Heart left ventricle (tissue), 16 donors: ENCODE measurements at regions of chr7 and their contacts with region 1.

Region 1: DNA sequence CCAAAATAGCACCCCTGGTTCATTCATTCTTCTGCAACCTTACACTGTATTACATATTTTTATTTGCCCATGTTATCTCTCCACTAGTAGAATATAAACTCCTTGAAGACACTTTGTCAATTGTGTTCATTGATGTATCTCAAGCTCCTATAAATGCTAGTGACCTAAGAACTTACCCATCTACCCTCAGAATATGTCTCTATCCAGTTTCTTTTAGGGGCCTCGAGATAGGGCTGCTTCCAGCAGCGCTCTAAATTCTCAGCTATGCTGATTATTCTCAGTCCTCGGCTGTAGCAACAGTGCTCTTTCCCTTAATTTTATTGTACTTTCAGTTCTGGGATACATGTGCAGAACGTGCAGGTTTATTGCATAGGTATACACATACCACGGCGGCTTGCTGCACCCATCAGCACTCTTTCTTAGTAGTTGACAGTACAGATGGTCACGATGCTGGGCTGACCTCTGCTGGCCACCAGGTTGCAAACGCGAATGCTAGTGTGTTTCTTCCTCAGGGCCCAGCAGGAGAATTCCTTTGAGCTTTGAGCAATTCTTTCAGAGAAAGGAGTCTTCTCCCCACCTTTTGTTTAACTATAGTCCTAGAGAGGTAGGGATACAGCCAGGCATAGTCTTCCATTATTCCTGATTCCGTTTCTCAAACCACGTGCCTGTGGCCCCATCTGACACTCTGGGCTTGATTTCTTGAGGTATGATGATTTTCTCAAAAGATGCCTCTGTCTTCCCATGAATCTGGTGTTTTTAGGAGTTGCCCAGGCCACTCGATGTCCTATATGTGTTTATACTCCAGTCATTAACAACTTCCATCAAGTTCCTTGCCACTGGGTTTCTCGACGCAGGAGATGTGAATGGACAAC is 49.1 kb upstream of the CDC14C start:
- DNase-seq: peak; percentile 8 to 55 (median 47)
- ATAC-seq: peak; percentile 75 to 87 (median 79)
- H3K4me3 ChIP-seq: no peak overlapping the region
- H3K27ac ChIP-seq: no peak overlapping the region
- H3K4me1 ChIP-seq: no peaks in the 10 kb centered on the region
- H3K27me3 ChIP-seq: peaks cover 0 to 2% (median 0%) of the 10 kb centered on the region in 9 donors
- CTCF ChIP-seq: peak; percentile 30 to 62 (median 50)
- POLR2A ChIP-seq: no peak

Region 2: GRCh38 chr7:48299580-48300169 is 575.6 kb before region 1 on chr7:
- intact Hi-C with region 1: loop called in 7 of 10 experiments (anchors 2 to 5 kb)
- DNase-seq: peak in 2 of 5 donors; percentile 30 to 45
- ATAC-seq: peak; percentile 55 to 75 (median 70)
- H3K4me3 ChIP-seq: no peak overlapping the region
- H3K27ac ChIP-seq: no peak overlapping the region
- H3K4me1 ChIP-seq: no peaks in the 10 kb centered on the region
- H3K27me3 ChIP-seq: no peaks in the 10 kb centered on the region
- CTCF ChIP-seq: peak; percentile 51 to 71 (median 62)
- POLR2A ChIP-seq: no peak

Region 3: DNA sequence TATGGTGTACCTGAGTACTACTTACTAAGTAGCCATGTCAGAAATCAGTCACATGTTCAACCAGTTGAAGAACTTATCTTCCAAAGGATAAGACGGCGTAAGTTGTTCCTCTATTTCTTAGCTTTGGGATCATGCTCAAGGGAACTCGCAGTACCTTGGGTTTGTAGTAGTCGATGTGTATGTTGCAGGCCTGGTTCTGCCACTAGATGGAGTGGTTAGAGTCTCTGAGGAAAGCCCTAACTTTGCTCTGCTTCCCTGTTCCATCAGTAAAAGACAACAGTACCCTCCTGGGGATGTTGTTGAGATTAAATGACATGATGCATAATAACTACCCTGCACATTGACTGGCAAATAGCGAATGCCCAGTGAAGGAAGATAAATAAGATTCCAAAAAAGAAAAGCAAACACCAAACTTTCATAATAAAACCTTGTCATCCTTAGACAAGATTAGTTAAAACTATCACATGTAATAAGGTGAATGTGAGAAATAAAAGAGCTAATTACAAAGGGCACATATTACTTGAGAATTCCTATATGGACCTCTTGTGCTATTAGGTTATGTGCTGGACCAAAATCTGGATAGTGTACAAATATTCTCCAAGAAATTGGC is 538.2 kb before region 1 on chr7:
- intact Hi-C with region 1: loop called in 1 of 10 experiments (anchors 2 kb)
- DNase-seq: no peak
- ATAC-seq: no peak
- H3K4me3 ChIP-seq: no peak overlapping the region
- H3K27ac ChIP-seq: no peak overlapping the region
- H3K4me1 ChIP-seq: no peaks in the 10 kb centered on the region
- H3K27me3 ChIP-seq: no peaks in the 10 kb centered on the region
- CTCF ChIP-seq: peak in 9 of 12 donors; percentile 17 to 49 (median 34)
- POLR2A ChIP-seq: no peak

Region 4: DNA sequence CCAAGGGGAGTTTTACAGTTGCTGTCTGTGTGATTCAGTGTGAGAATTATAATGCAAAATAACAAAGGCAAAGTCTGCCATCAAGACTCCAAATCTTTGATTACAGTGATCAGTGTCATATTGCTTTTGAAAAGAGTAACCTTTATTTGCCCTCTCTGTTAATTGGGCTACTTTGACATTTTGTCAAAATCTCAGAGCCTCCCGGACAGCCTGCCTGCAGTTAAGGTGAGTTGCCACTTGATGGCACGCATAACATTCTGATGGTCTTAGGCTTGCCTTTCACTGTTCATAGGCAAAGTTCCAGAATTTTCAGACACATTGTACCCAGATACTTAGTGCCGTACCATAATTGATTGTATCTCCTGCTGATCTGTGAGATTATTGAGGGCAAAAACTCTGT is 450.6 kb before region 1 on chr7:
- intact Hi-C with region 1: loop called in 9 of 10 experiments (anchors 2 to 10 kb)
- DNase-seq: no peak
- ATAC-seq: no peak
- H3K4me3 ChIP-seq: no peak overlapping the region
- H3K27ac ChIP-seq: no peak overlapping the region
- H3K4me1 ChIP-seq: no peaks in the 10 kb centered on the region
- H3K27me3 ChIP-seq: no peaks in the 10 kb centered on the region
- CTCF ChIP-seq: peak in 11 of 12 donors; percentile 11 to 51 (median 40)
- POLR2A ChIP-seq: no peak

Region 5: DNA sequence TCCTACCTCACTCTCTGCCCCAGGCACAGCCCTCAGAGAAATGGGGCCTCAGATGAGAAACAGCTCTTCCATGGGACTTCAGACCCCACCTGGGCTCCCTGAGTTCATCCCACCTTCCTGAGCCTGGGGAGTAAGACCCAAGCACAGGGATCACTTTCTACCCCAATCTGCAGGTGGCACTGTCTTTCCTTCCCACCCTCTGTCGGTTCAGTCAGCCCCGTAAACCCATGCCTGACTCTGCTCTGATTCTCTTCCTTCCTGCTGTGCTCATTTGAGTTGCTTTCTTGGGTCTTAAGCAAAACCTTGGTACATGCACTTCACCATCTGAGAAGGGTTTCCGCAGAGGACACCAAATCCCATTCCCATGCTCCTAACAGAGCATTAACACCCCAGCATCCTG is 257.3 kb before region 1 on chr7:
- intact Hi-C with region 1: loop called in 1 of 10 experiments (anchors 2 kb)
- DNase-seq: no peak
- ATAC-seq: no peak
- H3K4me3 ChIP-seq: no peak overlapping the region
- H3K27ac ChIP-seq: no peak overlapping the region
- H3K4me1 ChIP-seq: no peaks in the 10 kb centered on the region
- H3K27me3 ChIP-seq: no peaks in the 10 kb centered on the region
- CTCF ChIP-seq: no peak
- POLR2A ChIP-seq: no peak

Region 6: GRCh38 chr7:48708635-48709034 is 166.6 kb before region 1 on chr7:
- intact Hi-C with region 1: no loop called
- DNase-seq: no peak
- ATAC-seq: no peak
- H3K4me3 ChIP-seq: no peak overlapping the region
- H3K27ac ChIP-seq: no peak overlapping the region
- H3K4me1 ChIP-seq: no peaks in the 10 kb centered on the region
- H3K27me3 ChIP-seq: no peaks in the 10 kb centered on the region
- CTCF ChIP-seq: no peak
- POLR2A ChIP-seq: no peak